GM12878 (cell line): ENCODE measurements at regions of chr5 and their contacts with region 1.

Region 1: DNA sequence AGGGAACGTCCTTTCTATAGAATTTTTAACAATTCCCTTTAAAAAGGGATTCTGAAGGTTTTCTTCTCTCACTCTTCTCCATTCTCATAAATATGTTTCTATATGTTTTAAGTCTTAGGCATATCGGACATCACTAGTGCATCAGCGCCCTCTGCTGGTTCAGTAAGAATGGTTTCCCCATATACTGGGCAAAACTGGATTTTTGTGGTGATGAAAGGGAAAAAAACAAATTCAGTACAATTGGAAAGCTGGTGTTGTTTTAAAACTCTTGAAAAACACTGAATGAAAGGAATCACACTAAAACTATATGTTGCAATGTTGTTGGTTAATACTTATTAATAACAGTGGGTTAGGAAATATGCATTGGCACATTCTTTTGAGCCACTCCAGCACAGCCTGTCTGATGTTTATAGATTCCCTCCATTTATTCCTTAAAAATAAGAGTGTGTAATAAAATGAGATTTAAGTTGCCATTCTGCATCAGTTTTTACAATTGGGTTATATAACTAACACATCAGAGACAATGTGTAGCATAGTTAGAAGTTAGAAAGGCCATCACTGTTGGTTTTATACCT is 15.8 kb downstream of the CWC27 start:
- DNase-seq: peak; percentile 26
- ATAC-seq: peak; percentile 92
- H3K4me3 ChIP-seq: no peak overlapping the region
- H3K27ac ChIP-seq: no peak overlapping the region
- H3K4me1 ChIP-seq: no peaks in the 10 kb centered on the region
- H3K27me3 ChIP-seq: no peaks in the 10 kb centered on the region
- CTCF ChIP-seq: peak; percentile 64 to 85 (median 70)
- EP300 ChIP-seq: no peak
- POLR2A ChIP-seq: no peak
- RAD21 ChIP-seq: peak; percentile 96

Region 2: GRCh38 chr5:64229163-64229774 is 555.3 kb before region 1 on chr5:
- CTCF ChIA-PET with region 1: interaction called, 4 read pairs
- POLR2A ChIA-PET with region 1: no interaction called
- RAD21 ChIA-PET with region 1: no interaction called
- SMC1A ChIA-PET with region 1: interaction called, 3 read pairs
- in situ Hi-C with region 1: loop called (anchors 10 kb)
- intact Hi-C with region 1: loop called (anchors 5 kb)
- DNase-seq: no peak
- ATAC-seq: peak; percentile 78
- H3K4me3 ChIP-seq: no peak overlapping the region
- H3K27ac ChIP-seq: no peak overlapping the region
- H3K4me1 ChIP-seq: no peaks in the 10 kb centered on the region
- H3K27me3 ChIP-seq: no peaks in the 10 kb centered on the region
- CTCF ChIP-seq: peak; percentile 46 to 58 (median 57); a peak in 5 of 6 replicates
- EP300 ChIP-seq: no peak
- POLR2A ChIP-seq: no peak
- RAD21 ChIP-seq: peak; percentile 64

Region 3: DNA sequence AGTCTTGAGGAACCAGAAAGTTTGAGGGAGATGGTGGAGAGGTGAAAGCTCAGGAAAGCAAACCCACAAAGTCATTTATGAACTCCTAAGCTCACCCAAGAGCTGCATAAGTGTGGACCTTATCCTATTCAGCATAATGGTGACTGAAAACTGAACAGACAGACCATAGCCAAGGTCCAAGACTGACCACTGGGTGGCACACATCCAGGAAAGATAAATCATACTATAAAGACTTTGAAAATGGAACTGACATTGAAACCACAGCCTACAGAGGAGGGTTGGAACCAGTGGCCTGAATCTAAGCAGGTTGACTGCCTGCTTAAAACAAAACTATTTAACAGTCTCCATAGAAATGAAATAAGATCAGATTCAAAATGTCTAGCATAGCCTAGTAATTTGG is 399.8 kb before region 1 on chr5:
- CTCF ChIA-PET with region 1: no interaction called
- POLR2A ChIA-PET with region 1: no interaction called
- RAD21 ChIA-PET with region 1: no interaction called
- SMC1A ChIA-PET with region 1: no interaction called
- in situ Hi-C with region 1: no loop called
- intact Hi-C with region 1: loop called (anchors 5 kb)
- DNase-seq: no peak
- ATAC-seq: peak; percentile 98
- H3K4me3 ChIP-seq: no peak overlapping the region
- H3K27ac ChIP-seq: no peak overlapping the region
- H3K4me1 ChIP-seq: no peaks in the 10 kb centered on the region
- H3K27me3 ChIP-seq: no peaks in the 10 kb centered on the region
- CTCF ChIP-seq: peak; percentile 9 to 26 (median 24); a peak in 3 of 6 replicates
- EP300 ChIP-seq: no peak
- POLR2A ChIP-seq: no peak
- RAD21 ChIP-seq: no peak; the same call in 1 of the 2 replicates

Region 4: GRCh38 chr5:64505769-64506566 is 278.6 kb before region 1 on chr5 and contains the start of gene RGS7BP:
- CTCF ChIA-PET with region 1: no interaction called
- POLR2A ChIA-PET with region 1: no interaction called
- RAD21 ChIA-PET with region 1: no interaction called
- SMC1A ChIA-PET with region 1: no interaction called
- in situ Hi-C with region 1: no loop called
- intact Hi-C with region 1: no loop called
- DNase-seq: no peak
- ATAC-seq: peak; percentile 82
- H3K4me3 ChIP-seq: no peak within 1 kb of the TSS
- H3K27ac ChIP-seq: no peak within 1 kb of the TSS
- H3K4me1 ChIP-seq: no peaks in the 10 kb centered on the region
- H3K27me3 ChIP-seq: peaks cover 3 to 12% of the 10 kb centered on the region in 2 experiments; a peak in 3 of 4 replicates
- CTCF ChIP-seq: no peak
- EP300 ChIP-seq: no peak
- POLR2A ChIP-seq: no peak
- RAD21 ChIP-seq: no peak
- polyA plus RNA-seq, gene RGS7BP: not detected

Region 5: GRCh38 chr5:64634997-64635686 is 149.4 kb before region 1 on chr5:
- CTCF ChIA-PET with region 1: interaction called, 161 read pairs
- POLR2A ChIA-PET with region 1: interaction called, 4 read pairs
- RAD21 ChIA-PET with region 1: interaction called, 27 read pairs
- SMC1A ChIA-PET with region 1: interaction called, 91 read pairs
- in situ Hi-C with region 1: loop called (anchors 5 kb)
- intact Hi-C with region 1: loop called (anchors 1 kb)
- DNase-seq: no peak
- ATAC-seq: peak; percentile 53
- H3K4me3 ChIP-seq: no peak overlapping the region
- H3K27ac ChIP-seq: no peak overlapping the region
- H3K4me1 ChIP-seq: 0 out of 2 replicates have a peak, but pooled peaks cover 5% of the 10 kb centered on the region
- H3K27me3 ChIP-seq: no peaks in the 10 kb centered on the region; a peak in 1 of 4 replicates
- CTCF ChIP-seq: peak; percentile 47 to 59 (median 58); a peak in 5 of 6 replicates
- EP300 ChIP-seq: no peak
- POLR2A ChIP-seq: no peak
- RAD21 ChIP-seq: peak; percentile 80

Region 6: DNA sequence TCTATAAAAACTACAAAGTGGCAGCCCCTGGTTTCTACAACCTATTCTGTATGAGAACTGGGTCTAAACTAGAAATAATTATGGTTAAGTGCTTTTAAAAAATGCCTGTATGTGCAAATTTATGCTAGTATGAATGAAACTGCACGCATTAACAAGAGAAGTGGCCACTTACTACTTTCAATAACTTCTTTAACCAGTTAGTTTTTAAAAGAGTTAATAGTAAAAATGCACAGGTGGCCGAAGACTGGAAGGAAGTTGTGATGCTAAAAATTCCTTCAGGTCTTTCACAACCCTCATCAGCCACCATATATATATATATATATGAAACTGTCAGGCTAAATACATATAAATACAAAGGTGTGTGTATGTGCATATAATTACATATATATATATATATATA is 57.4 kb before region 1 on chr5:
- CTCF ChIA-PET with region 1: interaction called, 3 read pairs
- POLR2A ChIA-PET with region 1: no interaction called
- RAD21 ChIA-PET with region 1: no interaction called
- SMC1A ChIA-PET with region 1: no interaction called
- in situ Hi-C with region 1: no loop called
- intact Hi-C with region 1: loop called (anchors 5 kb)
- DNase-seq: no peak
- ATAC-seq: no peak
- H3K4me3 ChIP-seq: no peak overlapping the region
- H3K27ac ChIP-seq: no peak overlapping the region
- H3K4me1 ChIP-seq: no peaks in the 10 kb centered on the region
- H3K27me3 ChIP-seq: no peaks in the 10 kb centered on the region
- CTCF ChIP-seq: no peak
- EP300 ChIP-seq: no peak
- POLR2A ChIP-seq: no peak
- RAD21 ChIP-seq: no peak

Region 7: GRCh38 chr5:64768358-64769312 is 15.9 kb before region 1 on chr5 and contains the starts of genes CWC27 and SREK1IP1:
- CTCF ChIA-PET with region 1: interaction called, 28 read pairs
- POLR2A ChIA-PET with region 1: interaction called, 4 read pairs
- RAD21 ChIA-PET with region 1: interaction called, 9 read pairs
- SMC1A ChIA-PET with region 1: interaction called, 17 read pairs
- in situ Hi-C with region 1: no loop called
- intact Hi-C with region 1: no loop called
- DNase-seq: peak; percentile 79
- ATAC-seq: peak; percentile 91
- H3K4me3 ChIP-seq: peak within 1 kb of the TSS; percentile 94
- H3K27ac ChIP-seq: peak within 1 kb of the TSS; percentile 94
- H3K4me1 ChIP-seq: peaks cover 13% of the 10 kb centered on the region
- H3K27me3 ChIP-seq: no peaks in the 10 kb centered on the region
- CTCF ChIP-seq: peak in 1 of 3 experiments; percentile 16; a peak in 1 of 6 replicates
- EP300 ChIP-seq: peak in 1 of 2 experiments; percentile 28; a peak in 1 of 4 replicates
- POLR2A ChIP-seq: peak; percentile 93
- RAD21 ChIP-seq: no peak
- polyA plus RNA-seq, gene CWC27: 55.4 to 59.8 TPM
- polyA plus RNA-seq, gene SREK1IP1: 59.2 to 60.3 TPM